ENCODE measurements at regions of chr3 and their contacts with region 1.

Region 1: DNA sequence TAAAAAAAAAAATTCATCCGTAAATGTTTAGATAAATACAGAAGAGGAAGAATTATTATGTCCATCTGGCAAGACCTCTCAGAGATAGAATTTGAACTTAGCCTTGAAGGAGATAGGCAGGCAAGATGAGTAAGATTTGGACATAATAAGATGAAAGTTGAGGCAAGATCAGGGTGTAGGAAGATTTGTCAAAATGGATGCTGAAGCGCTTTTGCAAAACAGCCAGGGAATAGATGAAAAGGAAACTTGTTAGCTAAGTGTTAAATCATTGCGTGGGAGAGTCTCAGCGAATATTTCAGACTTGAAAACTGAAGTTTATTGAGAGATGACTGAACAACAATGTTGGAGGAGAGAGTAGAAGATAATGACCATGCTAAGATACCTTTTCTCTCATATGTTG is 7.2 kb downstream of the BRK1 start:
- DNase-seq: no peak

Region 2: GRCh38 chr3:9890249-9891071 is 232.3 kb before region 1 on chr3 and contains the start of gene JAGN1:
- intact Hi-C with region 1: no loop called
- DNase-seq: peak; percentile 97
- total RNA-seq, gene JAGN1: 19.6 to 20.0 TPM

Region 3: DNA sequence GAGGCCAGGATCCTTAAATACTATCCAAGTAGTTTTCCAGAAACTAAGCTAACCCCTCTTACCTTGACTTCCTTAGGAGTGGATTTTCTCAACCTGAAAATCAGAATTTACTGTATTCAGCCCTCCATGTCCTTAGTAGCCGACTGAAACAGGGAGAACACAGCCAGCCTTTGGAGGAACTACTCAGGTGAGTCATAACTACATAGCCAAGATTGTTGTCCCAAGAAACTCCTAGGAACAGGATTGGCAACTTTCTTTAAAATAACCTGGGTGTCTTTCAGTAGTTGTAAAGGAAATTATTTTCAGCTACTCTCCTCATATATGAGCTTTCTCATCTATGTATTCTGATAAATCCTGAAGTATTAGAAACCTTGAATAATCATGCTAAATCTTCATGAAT is 37.0 kb before region 1 on chr3:
- intact Hi-C with region 1: no loop called
- DNase-seq: no peak

Region 4: GRCh38 chr3:10108091-10108490 is 14.6 kb before region 1 on chr3 and contains the start of gene FANCD2OS:
- intact Hi-C with region 1: loop called in 1 of 2 experiments (anchors 1 kb)
- DNase-seq: no peak
- total RNA-seq, gene FANCD2OS: not detected

Measured in posterior vena cava (tissue), 2 donors.